ENCODE measurements at regions of chr20 and their contacts with region 1.

Region 1: GRCh38 chr20:53660078-53660909 is 66.7 kb upstream of the ZNF217 start:
- DNase-seq: no peak
- ATAC-seq: peak; percentile 51 to 60
- H3K4me3 ChIP-seq: peak overlapping the region; percentile 36 to 46 (median 40)
- H3K27ac ChIP-seq: peak overlapping the region; percentile 35 to 65 (median 41)
- H3K4me1 ChIP-seq: no peaks in the 10 kb centered on the region
- H3K27me3 ChIP-seq: no peaks in the 10 kb centered on the region
- CTCF ChIP-seq: no peak
- POLR2A ChIP-seq: no peak

Region 2: DNA sequence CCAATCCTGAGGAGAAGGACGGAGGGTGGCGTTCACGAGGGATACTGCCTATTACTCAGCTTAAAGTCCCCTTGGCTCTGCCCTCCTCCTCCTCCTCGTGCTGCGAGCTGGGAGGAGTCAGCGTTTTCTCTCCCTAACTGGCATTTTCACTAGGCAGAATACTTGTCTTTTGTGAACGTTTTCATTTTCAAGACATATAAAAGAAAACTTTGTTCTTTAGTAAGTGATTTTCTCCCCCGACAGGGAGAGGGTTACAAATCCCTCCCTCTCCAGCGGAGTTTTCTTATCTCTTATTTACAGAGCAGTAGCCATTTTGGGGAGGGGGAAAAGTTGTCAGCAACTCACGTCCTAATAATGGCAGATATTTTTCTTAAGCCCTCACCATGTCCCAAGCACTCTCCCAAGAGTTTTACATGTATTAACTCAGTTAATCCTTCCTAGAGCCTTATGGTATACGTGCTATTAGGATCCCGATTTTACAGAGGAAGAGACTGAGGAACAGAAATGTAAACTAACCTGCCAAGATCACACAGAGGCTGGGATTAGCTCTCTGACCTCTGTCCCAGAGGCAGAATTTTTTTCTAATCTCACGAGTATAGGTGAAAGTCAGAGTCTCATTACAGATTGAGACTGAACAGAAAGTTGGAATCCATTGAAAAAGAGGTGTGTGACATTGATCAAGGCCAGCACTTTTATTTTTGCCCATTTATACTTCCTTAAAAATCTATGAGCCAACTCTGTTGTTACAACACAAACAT is 36.7 kb before region 1 on chr20:
- in situ Hi-C with region 1: no loop called
- intact Hi-C with region 1: loop called (anchors 5 kb)
- DNase-seq: peak; percentile 77 to 83
- ATAC-seq: peak; percentile 94 to 96
- H3K4me3 ChIP-seq: peak overlapping the region; percentile 43 to 60 (median 58)
- H3K27ac ChIP-seq: peak overlapping the region; percentile 67 to 88 (median 85)
- H3K4me1 ChIP-seq: peaks cover 19 to 27% of the 10 kb centered on the region in 2 donors
- H3K27me3 ChIP-seq: no peaks in the 10 kb centered on the region
- CTCF ChIP-seq: no peak
- POLR2A ChIP-seq: peak; percentile 3 to 56

Region 3: DNA sequence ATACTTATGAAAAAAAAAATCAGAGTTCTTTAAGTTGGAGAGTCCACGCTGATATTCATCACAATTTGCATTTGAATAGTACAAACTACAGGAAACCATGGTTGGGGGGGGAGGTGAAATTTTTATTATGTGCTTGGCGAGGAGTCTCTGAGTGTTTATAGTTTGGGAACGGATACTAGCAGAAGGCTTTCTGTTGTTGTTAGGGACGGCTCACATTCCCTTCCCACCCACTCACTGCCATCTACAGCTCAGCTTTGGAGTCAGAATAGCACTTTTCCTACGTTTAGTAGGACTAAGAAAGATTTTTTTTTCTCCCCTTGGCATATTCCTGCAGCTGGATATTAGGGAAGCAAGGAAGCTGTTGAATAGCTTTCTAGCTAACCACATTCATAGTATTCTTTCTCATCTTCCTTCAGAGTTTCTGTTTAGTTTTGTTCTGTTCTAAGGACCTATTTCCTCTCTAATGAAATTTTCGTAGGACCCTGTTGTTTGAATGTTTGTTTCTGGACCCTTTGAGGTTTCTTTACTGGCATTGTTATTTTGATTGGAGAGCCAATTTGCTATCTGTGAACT is 168.5 kb after region 1 on chr20:
- in situ Hi-C with region 1: no loop called
- intact Hi-C with region 1: loop called (anchors 5 kb)
- DNase-seq: peak in 1 of 2 donors; percentile 30
- ATAC-seq: peak; percentile 69 to 75
- H3K4me3 ChIP-seq: peak overlapping the region; percentile 18 to 53 (median 32)
- H3K27ac ChIP-seq: peak overlapping the region; percentile 73 to 81 (median 77)
- H3K4me1 ChIP-seq: peaks cover 20 to 36% of the 10 kb centered on the region in 2 donors
- H3K27me3 ChIP-seq: no peaks in the 10 kb centered on the region
- CTCF ChIP-seq: no peak
- POLR2A ChIP-seq: peak in 1 of 2 donors; percentile 3